Activated CD4-positive, alpha-beta T cell treated with anti-CD3 and anti-CD28 coated beads, Interleukin-2, amount 10 ng/mL, durations not matched to agents 7 days and 5 days (primary cell): ENCODE measurements at regions of chr13 and their contacts with region 1.

Region 1: GRCh38 chr13:27425917-27426630 is 1.7 kb downstream of the GTF3A start:
- DNase-seq: peak; percentile 87
- H3K4me3 Mint-ChIP-seq: peak overlapping the region; percentile 87
- H3K27ac Mint-ChIP-seq: peak overlapping the region; percentile 97
- H3K4me1 Mint-ChIP-seq: peaks cover 61% of the 10 kb centered on the region
- H3K27me3 Mint-ChIP-seq: no peaks in the 10 kb centered on the region

Region 2: GRCh38 chr13:27442797-27443196 is 16.7 kb after region 1 on chr13:
- CTCF ChIA-PET with region 1: interaction called, 23 read pairs
- POLR2A ChIA-PET with region 1: interaction called, 4 read pairs
- DNase-seq: no peak
- H3K4me3 Mint-ChIP-seq: peak overlapping the region; percentile 60
- H3K27ac Mint-ChIP-seq: peak overlapping the region; percentile 77
- H3K4me1 Mint-ChIP-seq: peaks cover 74% of the 10 kb centered on the region
- H3K27me3 Mint-ChIP-seq: no peaks in the 10 kb centered on the region

Region 3: GRCh38 chr13:27449936-27450828 is 24.1 kb after region 1 on chr13 and contains the start of gene MTIF3:
- CTCF ChIA-PET with region 1: interaction called, 23 read pairs
- POLR2A ChIA-PET with region 1: interaction called, 10 read pairs
- DNase-seq: peak; percentile 96
- H3K4me3 Mint-ChIP-seq: peak within 1 kb of the TSS; percentile 93
- H3K27ac Mint-ChIP-seq: peak within 1 kb of the TSS; percentile 97
- H3K4me1 Mint-ChIP-seq: peaks cover 61% of the 10 kb centered on the region
- H3K27me3 Mint-ChIP-seq: no peaks in the 10 kb centered on the region
- total RNA-seq, gene MTIF3: 45.7 to 67.6 TPM

Region 4: GRCh38 chr13:27541386-27541785 is 115.3 kb after region 1 on chr13:
- CTCF ChIA-PET with region 1: no interaction called
- POLR2A ChIA-PET with region 1: no interaction called
- DNase-seq: no peak
- H3K4me3 Mint-ChIP-seq: no peak overlapping the region
- H3K27ac Mint-ChIP-seq: no peak overlapping the region
- H3K4me1 Mint-ChIP-seq: peaks cover 2% of the 10 kb centered on the region
- H3K27me3 Mint-ChIP-seq: no peaks in the 10 kb centered on the region